Activated CD8-positive, alpha-beta memory T cell treated with anti-CD3 and anti-CD28 coated beads, Interleukin-2, amount 10 ng/mL, durations not matched to agents 7 days and 5 days (primary cell): ENCODE measurements at regions of chr11 and their contacts with region 1.

Region 1: DNA sequence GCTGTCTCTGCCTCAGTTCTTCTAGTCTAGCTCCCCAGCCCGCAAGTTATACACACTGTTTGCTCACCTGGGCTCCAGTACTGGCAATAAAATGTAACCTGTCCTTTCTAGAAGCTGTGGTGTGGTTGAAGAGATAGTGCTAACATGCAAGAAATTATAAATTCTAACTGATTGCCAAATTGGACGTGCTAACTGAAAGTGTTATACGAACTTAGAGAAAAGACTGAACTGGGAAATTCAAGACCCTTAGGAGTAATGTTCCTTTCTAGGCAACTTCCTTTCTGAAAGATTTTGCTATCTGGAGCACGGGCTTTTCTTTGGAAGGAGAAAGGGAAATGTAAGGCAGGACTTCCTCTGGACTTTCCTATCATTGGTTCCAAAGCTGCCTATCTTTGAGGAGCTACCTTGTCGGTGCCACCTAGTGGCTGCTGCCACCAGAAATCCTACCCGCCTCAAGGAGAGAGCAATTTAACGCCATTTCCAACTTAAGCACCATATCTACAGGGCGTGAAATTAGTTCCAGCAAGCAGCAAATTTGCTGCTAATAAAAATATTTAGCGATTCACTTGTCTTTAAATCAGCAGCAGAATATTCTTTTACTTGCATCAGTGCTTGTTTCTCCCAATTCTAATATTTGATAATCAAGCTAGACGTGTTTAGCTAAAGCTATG is 12.7 kb upstream of the TMEM218 start:
- DNase-seq: peak; percentile 50
- ATAC-seq: peak; percentile 55
- H3K4me3 Mint-ChIP-seq: no peak overlapping the region
- H3K27ac Mint-ChIP-seq: no peak overlapping the region
- H3K4me1 Mint-ChIP-seq: no peaks in the 10 kb centered on the region
- H3K27me3 Mint-ChIP-seq: peaks cover 40% of the 10 kb centered on the region

Region 2: DNA sequence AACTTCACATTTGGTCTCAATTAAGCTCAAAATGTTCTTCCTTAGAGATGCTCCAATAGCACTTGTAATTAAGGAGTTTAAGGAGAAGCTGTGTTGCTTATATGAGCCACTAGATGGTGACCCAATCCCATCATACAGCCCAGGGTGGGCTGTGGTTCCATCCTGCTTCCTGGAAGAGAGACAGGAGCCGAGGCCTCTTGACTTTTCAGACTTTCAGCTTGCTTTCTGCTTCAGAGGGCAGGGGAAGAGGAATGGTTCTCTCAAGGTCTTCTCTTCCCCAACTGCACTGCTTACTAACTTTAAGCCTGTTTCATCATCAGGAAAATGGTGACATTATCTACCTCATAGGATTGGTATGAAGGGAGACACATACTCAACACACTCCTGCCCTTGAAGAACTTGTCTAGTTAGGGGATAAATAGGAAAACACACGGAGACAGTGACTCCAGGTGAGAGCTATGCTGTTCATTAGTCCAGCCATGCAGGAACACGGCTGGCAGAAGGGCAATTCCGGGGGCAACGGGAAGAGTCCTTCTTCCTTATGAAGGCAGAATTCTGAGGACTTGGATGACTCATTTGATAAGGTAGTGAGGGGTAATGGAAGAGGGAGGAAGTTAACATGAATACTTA is 32.7 kb before region 1 on chr11:
- CTCF ChIA-PET with region 1: interaction called, 16 read pairs
- DNase-seq: no peak
- ATAC-seq: peak; percentile 39
- H3K4me3 Mint-ChIP-seq: no peak overlapping the region
- H3K27ac Mint-ChIP-seq: no peak overlapping the region
- H3K4me1 Mint-ChIP-seq: peaks cover 2% of the 10 kb centered on the region
- H3K27me3 Mint-ChIP-seq: no peaks in the 10 kb centered on the region

Region 3: GRCh38 chr11:125111343-125112207 is 12.5 kb before region 1 on chr11 and contains the start of gene TMEM218:
- CTCF ChIA-PET with region 1: interaction called, 20 read pairs
- DNase-seq: peak; percentile 99
- ATAC-seq: peak; percentile 99
- H3K4me3 Mint-ChIP-seq: peak within 1 kb of the TSS; percentile 91
- H3K27ac Mint-ChIP-seq: peak within 1 kb of the TSS; percentile 93
- H3K4me1 Mint-ChIP-seq: peaks cover 20% of the 10 kb centered on the region
- H3K27me3 Mint-ChIP-seq: peaks cover 2% of the 10 kb centered on the region
- total RNA-seq, gene TMEM218: 14.1 to 16.1 TPM

Region 4: DNA sequence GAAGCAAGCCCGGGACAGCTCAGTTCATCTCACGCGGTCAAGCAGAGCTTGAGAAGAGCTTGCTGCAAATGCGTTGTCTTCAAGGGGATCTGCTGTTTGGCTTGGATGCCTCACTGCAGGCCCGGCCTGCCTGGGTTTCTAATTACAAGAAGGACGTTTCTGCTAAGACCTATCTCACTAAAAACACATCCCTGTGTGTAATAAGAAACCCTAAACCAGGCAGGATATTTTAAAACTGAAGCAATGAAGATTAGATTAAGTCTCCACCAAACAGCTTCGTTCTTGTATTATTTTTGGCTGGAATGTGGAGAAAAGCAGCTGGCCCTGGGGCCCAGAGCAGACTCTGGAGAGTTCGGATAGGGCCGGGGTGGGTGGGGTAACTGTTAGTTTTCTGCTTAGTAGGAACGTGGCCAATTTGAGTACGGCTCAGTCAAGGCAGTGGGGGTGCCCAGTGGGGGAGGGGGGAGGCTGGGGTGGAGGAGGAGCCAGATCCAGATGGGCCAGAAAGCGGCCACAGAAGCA is 46.5 kb after region 1 on chr11:
- CTCF ChIA-PET with region 1: no interaction called
- DNase-seq: no peak
- ATAC-seq: no peak
- H3K4me3 Mint-ChIP-seq: no peak overlapping the region
- H3K27ac Mint-ChIP-seq: no peak overlapping the region
- H3K4me1 Mint-ChIP-seq: peaks cover 13% of the 10 kb centered on the region
- H3K27me3 Mint-ChIP-seq: peaks cover 66% of the 10 kb centered on the region

Region 5: DNA sequence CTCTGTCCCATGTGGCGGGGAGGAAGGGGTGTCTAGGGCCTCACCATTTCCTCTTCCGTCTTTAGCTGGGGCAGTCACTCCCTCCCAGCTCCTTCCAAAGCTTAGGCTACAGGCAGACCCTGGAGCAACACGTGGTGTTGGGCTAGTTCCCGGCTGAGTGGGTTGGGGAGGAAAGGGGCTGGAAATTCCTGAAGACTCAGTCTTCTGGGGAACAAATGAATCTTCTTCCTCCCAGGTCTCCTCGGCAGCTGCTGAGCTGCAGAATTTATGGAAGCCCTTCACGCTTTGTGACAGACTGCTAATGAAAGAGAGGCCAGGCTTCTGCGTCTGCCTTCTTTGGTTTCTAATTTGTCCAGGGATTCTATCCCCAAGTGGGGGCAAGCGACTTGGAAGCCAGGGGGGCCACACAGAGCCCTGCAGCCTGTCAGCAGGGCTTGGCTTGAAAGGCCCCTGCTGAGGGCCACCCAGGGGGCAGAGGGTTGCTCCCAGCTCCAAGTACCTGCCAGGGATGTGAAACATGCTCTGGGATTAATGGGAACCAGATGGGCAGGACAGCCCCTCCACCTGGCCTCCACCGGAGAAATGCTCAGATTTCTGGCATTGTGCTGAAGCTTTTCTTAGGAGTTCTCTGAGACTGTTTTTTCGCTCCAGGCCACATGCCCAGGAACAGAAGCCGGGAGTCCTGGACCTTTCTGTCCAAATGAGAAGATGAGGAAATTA is 163.6 kb after region 1 on chr11:
- CTCF ChIA-PET with region 1: no interaction called
- DNase-seq: no peak
- ATAC-seq: no peak
- H3K4me3 Mint-ChIP-seq: no peak overlapping the region
- H3K27ac Mint-ChIP-seq: no peak overlapping the region
- H3K4me1 Mint-ChIP-seq: no peaks in the 10 kb centered on the region
- H3K27me3 Mint-ChIP-seq: peaks cover 18% of the 10 kb centered on the region